Colonic mucosa (tissue), 4 donors: ENCODE measurements at regions of chr1 and their contacts with region 1.

Region 1: DNA sequence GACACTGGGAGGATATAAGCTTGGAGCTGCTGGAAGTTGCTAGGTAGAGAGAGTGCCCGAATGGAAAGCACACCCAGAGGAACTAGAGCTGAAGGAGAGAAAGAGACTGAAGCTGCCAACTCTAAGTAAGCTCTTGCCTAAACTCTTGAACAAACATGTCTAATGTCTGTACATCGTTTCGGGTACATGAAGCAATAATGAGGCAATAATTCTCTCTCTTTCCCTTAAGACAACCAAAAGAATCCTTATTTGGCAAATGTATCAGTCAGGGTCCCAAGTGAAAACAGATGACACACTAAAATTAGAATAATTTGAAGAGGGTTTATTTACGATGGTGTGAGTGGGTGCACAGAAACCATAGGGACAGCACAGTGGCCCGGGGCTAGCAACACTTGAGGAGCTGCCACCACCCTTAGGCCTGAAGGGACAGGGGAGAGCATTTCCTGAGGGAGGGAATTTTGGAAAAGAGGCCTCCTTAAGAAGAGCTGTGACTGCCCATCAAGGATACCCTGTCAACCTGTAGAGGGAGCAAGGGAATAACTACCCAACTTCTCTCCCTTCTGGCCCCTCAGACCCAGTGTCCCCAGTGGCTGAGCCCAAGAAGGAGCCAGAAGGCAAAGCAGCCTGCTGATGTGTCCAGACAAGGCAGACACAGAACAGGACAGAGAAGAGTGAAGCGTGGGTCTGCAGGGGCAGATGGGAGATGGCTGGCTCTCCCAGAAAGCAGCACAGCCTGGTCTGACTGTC is 36.1 kb upstream of the KHDRBS1 start:
- DNase-seq: no peak
- H3K4me3 ChIP-seq: no peak overlapping the region
- H3K27ac ChIP-seq: no peak overlapping the region
- H3K4me1 ChIP-seq: no peaks in the 10 kb centered on the region
- H3K27me3 ChIP-seq: no peaks in the 10 kb centered on the region
- CTCF ChIP-seq: no peak

Region 2: DNA sequence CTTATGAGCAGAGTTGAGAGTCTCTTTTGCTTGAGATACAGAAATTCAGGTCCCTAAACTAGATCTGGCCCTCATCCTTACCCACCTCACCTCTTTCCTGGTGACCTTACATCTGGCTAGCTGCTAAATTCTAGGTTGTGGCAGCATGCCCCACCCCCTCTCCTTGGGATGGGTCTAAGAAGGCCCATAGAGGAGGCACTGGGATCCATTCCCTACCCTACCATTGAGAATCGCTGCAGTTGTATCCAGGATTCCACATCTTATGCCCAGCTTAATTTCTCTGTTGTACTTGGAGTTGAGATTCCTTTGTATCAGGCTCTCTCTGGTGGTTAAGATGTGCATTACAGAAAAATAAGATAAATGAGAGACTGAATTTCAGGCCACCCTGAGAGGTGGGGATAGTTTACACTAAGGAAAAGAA is 85.7 kb after region 1 on chr1:
- intact Hi-C with region 1: loop called (anchors 10 kb)
- DNase-seq: no peak
- H3K4me3 ChIP-seq: no peak overlapping the region
- H3K27ac ChIP-seq: no peak overlapping the region
- H3K4me1 ChIP-seq: no peaks in the 10 kb centered on the region
- H3K27me3 ChIP-seq: no peaks in the 10 kb centered on the region
- CTCF ChIP-seq: peak; percentile 34

Region 3: GRCh38 chr1:32082022-32082421 is 104.5 kb after region 1 on chr1:
- intact Hi-C with region 1: no loop called
- DNase-seq: no peak
- H3K4me3 ChIP-seq: no peak overlapping the region
- H3K27ac ChIP-seq: no peak overlapping the region
- H3K4me1 ChIP-seq: no peaks in the 10 kb centered on the region
- H3K27me3 ChIP-seq: no peaks in the 10 kb centered on the region
- CTCF ChIP-seq: no peak